HEK293 (cell line): ENCODE measurements at regions of chr6 and their contacts with region 1.

Region 1: GRCh38 chr6:32933636-32934085 is 7.2 kb downstream of the HLA-DMB start:
- H3K4me3 ChIP-seq: no peak overlapping the region
- H3K27ac ChIP-seq: no peak overlapping the region
- H3K4me1 ChIP-seq: no peaks in the 10 kb centered on the region
- CTCF ChIP-seq: peak; percentile 37; the same call in 1 of the 2 replicates

Region 2: GRCh38 chr6:32894080-32895005 is 39.3 kb before region 1 on chr6:
- CTCF ChIA-PET with region 1: interaction called, 16 read pairs
- POLR2A ChIA-PET with region 1: interaction called, 10 read pairs
- H3K4me3 ChIP-seq: peak overlapping the region; percentile 66
- H3K27ac ChIP-seq: peak overlapping the region; percentile 96
- H3K4me1 ChIP-seq: peaks cover 5% of the 10 kb centered on the region
- CTCF ChIP-seq: peak; percentile 52; the same call in 1 of the 2 replicates

Region 3: GRCh38 chr6:32912951-32913350 is 20.7 kb before region 1 on chr6:
- CTCF ChIA-PET with region 1: interaction called, 43 read pairs
- POLR2A ChIA-PET with region 1: no interaction called
- H3K4me3 ChIP-seq: no peak overlapping the region
- H3K27ac ChIP-seq: no peak overlapping the region
- H3K4me1 ChIP-seq: no peaks in the 10 kb centered on the region
- CTCF ChIP-seq: no peak

Region 4: DNA sequence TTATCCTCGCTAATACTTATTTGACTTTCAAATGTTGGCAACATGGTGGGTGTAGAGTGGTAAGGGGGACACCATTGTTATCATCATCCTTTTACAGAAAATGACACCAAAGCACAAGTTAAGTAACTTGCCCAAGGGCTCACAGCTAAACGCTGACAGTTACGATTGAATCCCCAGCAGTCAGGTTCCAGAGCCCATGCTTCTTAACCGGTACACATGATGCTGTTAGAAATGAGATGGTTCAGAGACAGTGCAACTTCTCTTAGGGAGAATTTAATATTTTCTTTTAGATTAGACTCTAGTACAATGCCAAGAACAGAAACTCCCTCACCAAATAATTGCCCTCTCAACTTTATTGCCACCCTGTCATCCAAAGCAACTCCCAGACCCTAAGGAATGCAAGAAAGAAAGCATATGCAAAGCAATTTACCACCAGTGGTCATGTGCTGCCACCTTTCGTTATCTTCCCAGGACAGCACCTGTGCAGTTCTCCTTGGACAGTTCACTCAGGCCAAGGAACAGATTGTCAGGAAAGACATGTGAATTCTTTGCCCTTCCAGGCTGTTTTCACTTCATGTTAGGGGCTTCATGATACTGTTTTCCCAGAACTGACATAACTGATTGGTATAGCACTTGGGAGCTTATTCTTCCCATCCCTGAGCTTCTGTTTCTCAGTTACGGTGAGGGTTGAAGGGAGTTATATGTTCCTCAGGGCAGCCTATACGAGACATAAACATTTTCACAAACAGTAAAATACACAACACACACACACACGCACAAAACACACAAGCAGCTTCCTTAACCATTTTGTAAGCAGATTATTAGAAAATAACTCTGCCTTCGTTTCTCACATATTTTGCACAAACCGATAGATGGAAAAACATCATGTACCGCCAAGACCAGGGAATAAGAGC is 14.1 kb after region 1 on chr6:
- CTCF ChIA-PET with region 1: interaction called, 109 read pairs
- POLR2A ChIA-PET with region 1: interaction called, 4 read pairs
- H3K4me3 ChIP-seq: no peak overlapping the region
- H3K27ac ChIP-seq: no peak overlapping the region
- H3K4me1 ChIP-seq: no peaks in the 10 kb centered on the region
- CTCF ChIP-seq: peak; percentile 82